GM10248 (cell line): ENCODE measurements at regions of chr12 and their contacts with region 1.

Region 1: DNA sequence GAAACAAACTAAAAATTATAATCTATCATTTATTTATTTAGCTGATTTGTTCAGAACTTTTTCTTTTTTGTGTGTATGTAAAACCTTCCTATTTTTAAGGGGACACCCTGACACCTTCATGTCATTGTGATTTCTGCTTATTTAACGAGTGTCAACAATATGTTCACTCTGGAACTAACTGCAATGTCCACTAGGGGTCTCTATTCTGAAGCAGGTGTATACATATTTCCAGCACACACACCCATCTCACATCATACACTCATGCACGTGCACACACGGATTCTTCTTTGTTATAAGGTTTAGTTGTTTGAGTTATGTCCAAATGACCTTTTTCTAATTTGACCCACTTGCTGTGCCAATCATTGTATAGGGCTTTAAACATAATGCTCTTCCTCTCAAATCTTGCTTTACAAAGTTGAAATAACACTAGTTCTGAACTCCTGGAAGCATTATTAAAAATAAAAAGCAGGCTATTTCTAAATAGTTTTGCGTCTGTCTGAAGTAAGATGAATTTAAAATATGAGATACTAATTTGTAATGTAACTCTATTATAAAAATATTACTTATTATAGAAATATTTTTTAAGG is 15.5 kb downstream of the E2F7 start:
- DNase-seq: peak; percentile 43
- CTCF ChIP-seq: peak; percentile 71

Region 2: GRCh38 chr12:77062846-77063461 is 13.1 kb after region 1 on chr12:
- CTCF ChIA-PET with region 1: interaction called, 61 read pairs
- POLR2A ChIA-PET with region 1: no interaction called
- DNase-seq: peak; percentile 46
- CTCF ChIP-seq: no peak

Region 3: DNA sequence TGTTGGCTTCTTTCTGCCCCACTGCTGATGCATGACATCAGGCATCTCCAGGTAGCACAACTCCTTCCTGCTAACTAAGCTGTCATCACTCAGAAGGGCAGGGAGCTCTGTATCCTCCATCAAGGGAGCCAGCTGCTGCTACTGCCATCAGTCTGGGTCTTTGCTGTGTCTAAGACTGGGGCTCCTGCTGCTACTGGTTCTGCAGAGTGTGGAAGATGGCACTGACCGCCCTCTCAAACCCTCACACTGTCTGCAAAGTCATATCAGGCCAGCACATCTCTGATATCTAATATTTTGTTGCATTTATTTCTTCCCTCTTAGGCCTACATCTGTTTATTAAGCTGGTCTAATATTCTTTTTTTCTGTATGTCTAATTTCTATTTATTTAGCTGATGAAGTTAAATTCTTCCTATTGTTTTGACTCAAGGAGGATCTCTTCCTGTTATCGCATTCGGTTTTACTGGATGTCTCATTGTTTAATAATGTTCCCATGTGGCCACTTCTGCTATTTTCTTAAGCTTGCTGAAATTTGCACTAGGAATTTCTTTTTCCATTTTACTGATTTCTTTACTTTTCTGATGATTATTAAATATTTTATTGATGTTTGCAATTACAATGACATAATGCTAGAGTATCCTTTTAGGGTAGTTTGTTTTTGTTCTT is 23.1 kb after region 1 on chr12:
- CTCF ChIA-PET with region 1: no interaction called
- POLR2A ChIA-PET with region 1: no interaction called
- DNase-seq: no peak
- CTCF ChIP-seq: no peak